Activated T-helper 2 cell treated with anti-CD3 and anti-CD28 coated beads, Interferon-gamma antibody, Interleukin-2, Interleukin-4, amounts not matched to agents 10 μg/mL and 5 μg/mL and 100 μg/mL, durations not matched to agents 14 hours and 24 hours and 36 hours (primary cell): ENCODE measurements at regions of chr4 and their contacts with region 1.

Region 1: GRCh38 chr4:168815379-168816345 is 194.4 kb downstream of the CBR4 start:
- DNase-seq: no peak
- H3K4me3 Mint-ChIP-seq: no peak overlapping the region
- H3K27ac Mint-ChIP-seq: no peak overlapping the region
- H3K4me1 Mint-ChIP-seq: peaks cover 17% of the 10 kb centered on the region
- H3K27me3 Mint-ChIP-seq: peaks cover 40% of the 10 kb centered on the region

Region 2: GRCh38 chr4:168631241-168632162 is 184.2 kb before region 1 on chr4:
- intact Hi-C with region 1: loop called (anchors 5 kb)
- DNase-seq: no peak
- H3K4me3 Mint-ChIP-seq: no peak overlapping the region
- H3K27ac Mint-ChIP-seq: no peak overlapping the region
- H3K4me1 Mint-ChIP-seq: peaks cover 15% of the 10 kb centered on the region
- H3K27me3 Mint-ChIP-seq: peaks cover 70% of the 10 kb centered on the region